ENCODE measurements at regions of chr5 and their contacts with region 1.

Region 1: DNA sequence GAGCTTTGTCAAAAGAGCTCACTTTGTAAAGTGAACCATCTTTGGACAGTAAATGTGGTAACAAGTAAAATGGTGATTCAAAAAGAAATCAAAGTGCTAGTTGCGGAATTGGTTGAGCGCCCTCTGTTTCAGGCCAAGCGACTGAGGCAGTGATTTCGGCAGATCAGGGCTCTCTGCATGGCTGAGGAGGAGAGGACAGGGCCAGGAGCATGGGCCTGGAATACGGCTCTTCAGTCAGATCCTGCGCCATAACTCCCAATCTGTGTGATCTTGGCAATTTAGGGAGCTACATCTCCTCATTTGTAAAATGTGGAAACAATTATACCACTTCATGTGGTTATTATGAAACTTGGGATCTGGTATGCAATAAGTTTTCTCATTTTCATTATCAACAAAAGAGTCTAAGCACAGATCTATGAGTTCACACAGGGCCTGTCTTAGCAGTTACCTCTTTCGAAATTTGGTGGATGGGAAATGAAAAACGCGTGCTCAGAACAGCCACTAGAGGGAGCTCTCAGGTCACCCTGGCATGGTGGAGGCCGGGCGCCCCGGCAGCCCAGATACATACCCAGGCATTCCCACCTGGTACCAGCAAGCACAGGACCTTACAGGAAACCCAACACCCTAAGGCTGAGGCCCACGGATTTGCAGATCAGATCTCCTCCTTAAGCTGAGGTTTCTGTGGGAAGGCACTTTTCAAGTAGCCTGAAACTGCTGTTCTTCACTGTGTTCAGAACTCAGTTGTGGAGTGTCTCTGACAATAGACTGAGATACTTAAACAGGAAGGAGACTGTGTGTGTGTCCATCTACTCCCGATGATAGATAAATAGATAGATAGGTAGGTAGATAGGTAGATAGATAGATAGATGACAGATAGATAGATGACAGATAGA is 303.7 kb downstream of the RAB3C start:
- DNase-seq: peak; percentile 83
- H3K4me3 Mint-ChIP-seq: peak overlapping the region; percentile 24
- H3K27ac Mint-ChIP-seq: peak overlapping the region; percentile 70
- H3K4me1 Mint-ChIP-seq: peaks cover 40% of the 10 kb centered on the region
- H3K27me3 Mint-ChIP-seq: peaks cover 7% of the 10 kb centered on the region

Region 2: DNA sequence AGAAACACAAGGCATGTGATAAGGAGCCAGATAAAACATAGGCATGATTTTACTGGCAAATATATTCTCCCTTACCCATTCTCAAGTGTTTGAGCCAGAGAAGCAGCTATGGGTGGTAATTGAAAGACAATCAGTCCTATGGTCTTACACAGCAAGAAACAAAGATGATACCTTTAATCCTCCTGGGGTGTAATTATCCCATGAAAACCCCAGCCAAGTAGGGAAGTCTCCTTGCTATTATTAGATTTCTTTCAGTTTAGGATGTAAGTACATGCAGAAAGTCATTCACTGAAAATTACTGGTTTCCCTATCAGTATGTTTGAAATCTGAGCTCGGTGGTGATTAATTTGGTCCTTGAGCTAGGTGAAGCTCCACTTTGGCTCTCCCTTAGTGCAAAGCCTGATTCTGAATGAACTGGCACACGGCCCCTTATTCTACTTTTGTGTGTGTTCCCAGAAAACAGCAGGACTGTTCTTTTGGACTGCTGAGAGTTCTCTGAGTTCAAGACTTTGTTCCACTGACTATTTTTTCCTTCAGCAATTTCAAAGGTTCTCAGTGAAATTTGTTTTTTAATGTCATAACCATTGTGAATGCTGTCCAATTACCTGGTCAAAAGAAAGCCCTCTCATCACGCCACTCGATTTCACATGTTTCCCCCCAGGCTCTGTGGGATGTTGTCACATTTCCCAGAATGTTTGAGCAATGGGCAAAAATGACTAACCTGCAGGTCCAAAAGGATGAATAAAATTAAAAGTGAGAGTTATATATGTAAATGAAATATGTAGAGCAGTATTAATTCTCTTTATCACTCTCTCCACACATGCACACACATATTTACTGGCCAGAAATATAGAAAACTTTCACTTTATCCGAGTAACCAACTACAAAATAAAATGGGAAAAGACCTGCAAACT is 39.3 kb after region 1 on chr5:
- CTCF ChIA-PET with region 1: interaction called, 5 read pairs
- POLR2A ChIA-PET with region 1: interaction called, 5 read pairs
- intact Hi-C with region 1: loop called (anchors 1 kb)
- DNase-seq: peak; percentile 48
- H3K4me3 Mint-ChIP-seq: no peak overlapping the region
- H3K27ac Mint-ChIP-seq: peak overlapping the region; percentile 85
- H3K4me1 Mint-ChIP-seq: peaks cover 41% of the 10 kb centered on the region
- H3K27me3 Mint-ChIP-seq: peaks cover 2% of the 10 kb centered on the region

Region 3: DNA sequence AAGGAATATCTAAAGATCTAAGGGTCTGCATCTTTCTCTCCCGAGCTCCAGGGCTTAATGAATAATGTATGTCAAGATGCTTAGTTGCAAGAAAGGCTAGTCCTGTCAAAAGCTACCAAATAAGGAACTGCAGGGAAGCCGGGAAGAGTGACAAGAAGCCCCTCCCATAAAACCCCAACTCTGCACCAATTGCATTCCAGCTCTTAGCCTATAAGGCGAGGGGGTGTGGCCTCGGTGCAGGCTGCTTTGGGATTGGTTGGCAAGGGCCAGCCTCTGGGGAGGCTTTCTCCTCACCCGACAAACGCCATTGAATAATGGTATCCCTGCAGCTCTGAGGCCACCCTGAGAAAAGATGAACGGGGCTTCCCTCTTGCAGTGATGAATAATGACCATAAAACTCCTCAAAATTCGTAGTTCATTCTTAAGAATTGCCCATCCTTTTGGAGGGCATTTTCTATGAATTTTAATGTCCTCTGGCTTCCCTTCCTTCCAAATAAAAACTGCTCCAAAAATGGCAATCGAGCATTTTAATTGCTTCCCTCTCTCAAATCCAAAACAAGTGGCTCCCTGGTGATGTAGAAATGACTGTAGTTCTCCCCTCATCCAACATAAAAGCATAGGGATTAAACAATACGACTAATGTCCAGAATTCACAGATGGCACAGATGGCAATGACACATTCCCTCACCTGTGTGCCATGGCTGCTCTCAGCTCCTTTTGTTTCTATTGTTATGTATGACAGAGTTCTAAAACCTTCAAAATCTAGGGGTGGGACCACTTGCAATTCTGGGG is 113.4 kb after region 1 on chr5:
- CTCF ChIA-PET with region 1: interaction called, 16 read pairs
- POLR2A ChIA-PET with region 1: no interaction called
- intact Hi-C with region 1: no loop called
- DNase-seq: no peak
- H3K4me3 Mint-ChIP-seq: no peak overlapping the region
- H3K27ac Mint-ChIP-seq: no peak overlapping the region
- H3K4me1 Mint-ChIP-seq: peaks cover 45% of the 10 kb centered on the region
- H3K27me3 Mint-ChIP-seq: no peaks in the 10 kb centered on the region

Region 4: DNA sequence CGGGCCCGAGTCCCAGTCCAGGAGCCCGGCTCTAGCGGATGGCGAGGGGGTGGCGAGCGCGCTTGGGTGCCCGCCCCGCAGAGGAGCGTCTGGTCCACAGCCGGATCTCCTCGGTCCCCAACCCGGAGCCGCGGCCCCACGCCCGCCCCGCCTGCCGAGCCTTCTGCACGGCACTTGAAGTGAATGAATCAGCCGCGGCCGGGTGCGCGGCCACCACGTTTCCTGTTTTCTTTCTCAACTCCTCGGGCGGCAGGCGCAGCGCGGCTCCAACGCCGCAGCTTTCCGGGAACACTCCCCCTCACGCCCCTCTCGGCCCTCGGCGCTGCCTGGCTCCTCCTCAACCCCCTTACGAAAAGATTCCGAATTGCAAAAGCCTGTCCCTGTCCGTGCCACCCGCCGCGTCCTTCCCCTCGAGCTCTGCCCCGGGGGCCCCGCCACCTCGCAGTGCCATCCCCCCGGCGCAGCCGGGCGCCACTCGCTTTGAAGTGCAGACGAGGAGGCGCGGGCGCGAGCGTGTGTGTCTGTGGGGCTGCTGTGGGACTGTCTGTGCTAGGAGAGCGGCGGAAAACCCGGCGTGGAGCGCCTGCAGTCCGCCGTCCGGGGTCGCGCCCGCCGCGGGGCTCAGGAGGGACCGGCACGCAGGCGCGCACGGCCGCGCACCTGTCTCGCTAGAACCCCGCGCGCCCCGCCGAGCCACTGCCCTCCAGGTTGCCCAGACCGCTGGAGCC is 152.9 kb after region 1 on chr5:
- CTCF ChIA-PET with region 1: interaction called, 24 read pairs
- POLR2A ChIA-PET with region 1: interaction called, 6 read pairs
- intact Hi-C with region 1: loop called (anchors 1 kb)
- DNase-seq: peak; percentile 93
- H3K4me3 Mint-ChIP-seq: peak overlapping the region; percentile 82
- H3K27ac Mint-ChIP-seq: peak overlapping the region; percentile 87
- H3K4me1 Mint-ChIP-seq: peaks cover 48% of the 10 kb centered on the region
- H3K27me3 Mint-ChIP-seq: no peaks in the 10 kb centered on the region

Region 5: GRCh38 chr5:59174248-59174844 is 287.8 kb after region 1 on chr5:
- CTCF ChIA-PET with region 1: interaction called, 65 read pairs
- POLR2A ChIA-PET with region 1: no interaction called
- intact Hi-C with region 1: loop called (anchors 1 kb)
- DNase-seq: peak; percentile 33
- H3K4me3 Mint-ChIP-seq: no peak overlapping the region
- H3K27ac Mint-ChIP-seq: no peak overlapping the region
- H3K4me1 Mint-ChIP-seq: peaks cover 24% of the 10 kb centered on the region
- H3K27me3 Mint-ChIP-seq: no peaks in the 10 kb centered on the region

Region 6: DNA sequence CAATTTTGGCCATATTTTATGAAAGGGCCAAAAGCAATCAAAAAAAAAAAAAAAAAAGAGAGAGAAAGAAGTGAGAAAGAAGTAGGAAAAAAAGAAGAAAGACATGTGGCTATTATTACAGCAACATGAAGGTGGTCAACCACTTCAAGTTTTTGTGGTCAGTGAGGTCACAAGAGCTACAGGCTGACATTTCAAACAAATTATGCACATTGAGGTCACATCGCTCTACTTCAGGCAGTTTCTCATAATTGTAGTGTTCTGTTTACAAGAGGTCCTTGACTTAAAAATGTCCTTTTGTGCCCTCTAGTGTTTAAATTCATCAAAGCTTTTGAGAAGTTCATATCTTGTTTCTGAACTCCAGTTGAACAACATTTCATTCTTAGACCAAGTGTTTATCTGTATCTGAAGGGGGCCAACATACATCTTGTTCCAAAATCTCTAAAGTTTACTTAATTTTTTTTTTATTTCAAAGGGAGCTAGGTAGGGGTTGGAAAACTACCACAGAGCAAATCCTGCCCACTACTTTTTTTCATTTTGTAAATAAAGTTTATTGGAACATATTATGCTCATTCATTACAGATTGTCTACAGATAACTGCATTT is 493.9 kb after region 1 on chr5:
- CTCF ChIA-PET with region 1: interaction called, 4 read pairs
- POLR2A ChIA-PET with region 1: no interaction called
- intact Hi-C with region 1: loop called (anchors 1 kb)
- DNase-seq: peak; percentile 24
- H3K4me3 Mint-ChIP-seq: no peak overlapping the region
- H3K27ac Mint-ChIP-seq: no peak overlapping the region
- H3K4me1 Mint-ChIP-seq: no peaks in the 10 kb centered on the region
- H3K27me3 Mint-ChIP-seq: no peaks in the 10 kb centered on the region

Measured in activated CD4-positive, alpha-beta memory T cell treated with anti-CD3 and anti-CD28 coated beads for 36 hours (primary cell).